ENCODE measurements at regions of chr18 and their contacts with region 1.

Region 1: GRCh38 chr18:54776282-54776977 is 51.8 kb upstream of the RAB27B start:
- DNase-seq: peak; percentile 66
- H3K4me3 ChIP-seq: no peak overlapping the region
- H3K27ac ChIP-seq: peak overlapping the region; percentile 88
- H3K4me1 ChIP-seq: peaks cover 16% of the 10 kb centered on the region
- H3K27me3 ChIP-seq: no peaks in the 10 kb centered on the region
- CTCF ChIP-seq: no peak
- POLR2A ChIP-seq: no peak

Region 2: DNA sequence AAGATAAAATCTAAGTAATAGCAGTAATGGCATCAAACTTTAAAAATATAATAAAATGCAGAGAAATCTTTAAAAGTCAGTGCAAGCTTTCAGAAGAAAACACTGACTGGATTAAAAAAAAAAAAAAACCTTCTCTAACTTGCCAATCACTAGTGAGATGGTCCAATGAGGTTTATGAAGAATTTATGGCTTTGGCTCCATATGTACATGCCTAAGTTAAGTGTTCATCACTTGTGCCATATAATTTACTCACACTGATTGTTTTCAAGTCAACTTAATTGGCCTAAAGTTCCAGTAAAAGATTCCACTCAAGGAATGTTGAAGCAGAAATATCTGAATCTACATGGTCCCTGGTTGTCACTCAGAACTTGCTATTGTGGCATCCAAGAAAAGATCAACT is 11.2 kb after region 1 on chr18:
- CTCF ChIA-PET with region 1: interaction called, 11 read pairs
- POLR2A ChIA-PET with region 1: no interaction called
- dilution Hi-C with region 1: no loop called
- intact Hi-C with region 1: no loop called
- DNase-seq: no peak
- H3K4me3 ChIP-seq: no peak overlapping the region
- H3K27ac ChIP-seq: no peak overlapping the region
- H3K4me1 ChIP-seq: no peaks in the 10 kb centered on the region
- H3K27me3 ChIP-seq: no peaks in the 10 kb centered on the region
- CTCF ChIP-seq: no peak
- POLR2A ChIP-seq: no peak

Region 3: GRCh38 chr18:54805571-54806334 is 29.3 kb after region 1 on chr18:
- CTCF ChIA-PET with region 1: interaction called, 4 read pairs
- POLR2A ChIA-PET with region 1: no interaction called
- dilution Hi-C with region 1: no loop called
- intact Hi-C with region 1: loop called (anchors 1 kb)
- DNase-seq: peak; percentile 90
- H3K4me3 ChIP-seq: no peak overlapping the region
- H3K27ac ChIP-seq: peak overlapping the region; percentile 55
- H3K4me1 ChIP-seq: peaks cover 11% of the 10 kb centered on the region
- H3K27me3 ChIP-seq: no peaks in the 10 kb centered on the region
- CTCF ChIP-seq: no peak
- POLR2A ChIP-seq: peak; percentile 25

Region 4: GRCh38 chr18:54916507-54916906 is 140.1 kb after region 1 on chr18:
- CTCF ChIA-PET with region 1: no interaction called
- POLR2A ChIA-PET with region 1: no interaction called
- dilution Hi-C with region 1: no loop called
- intact Hi-C with region 1: no loop called
- DNase-seq: no peak
- H3K4me3 ChIP-seq: no peak overlapping the region
- H3K27ac ChIP-seq: no peak overlapping the region
- H3K4me1 ChIP-seq: no peaks in the 10 kb centered on the region
- H3K27me3 ChIP-seq: no peaks in the 10 kb centered on the region
- CTCF ChIP-seq: no peak
- POLR2A ChIP-seq: no peak

Measured in endothelial cell of umbilical vein (primary cell).